AG04450 (cell line): ENCODE measurements at regions of chr17 and their contacts with region 1.

Region 1: DNA sequence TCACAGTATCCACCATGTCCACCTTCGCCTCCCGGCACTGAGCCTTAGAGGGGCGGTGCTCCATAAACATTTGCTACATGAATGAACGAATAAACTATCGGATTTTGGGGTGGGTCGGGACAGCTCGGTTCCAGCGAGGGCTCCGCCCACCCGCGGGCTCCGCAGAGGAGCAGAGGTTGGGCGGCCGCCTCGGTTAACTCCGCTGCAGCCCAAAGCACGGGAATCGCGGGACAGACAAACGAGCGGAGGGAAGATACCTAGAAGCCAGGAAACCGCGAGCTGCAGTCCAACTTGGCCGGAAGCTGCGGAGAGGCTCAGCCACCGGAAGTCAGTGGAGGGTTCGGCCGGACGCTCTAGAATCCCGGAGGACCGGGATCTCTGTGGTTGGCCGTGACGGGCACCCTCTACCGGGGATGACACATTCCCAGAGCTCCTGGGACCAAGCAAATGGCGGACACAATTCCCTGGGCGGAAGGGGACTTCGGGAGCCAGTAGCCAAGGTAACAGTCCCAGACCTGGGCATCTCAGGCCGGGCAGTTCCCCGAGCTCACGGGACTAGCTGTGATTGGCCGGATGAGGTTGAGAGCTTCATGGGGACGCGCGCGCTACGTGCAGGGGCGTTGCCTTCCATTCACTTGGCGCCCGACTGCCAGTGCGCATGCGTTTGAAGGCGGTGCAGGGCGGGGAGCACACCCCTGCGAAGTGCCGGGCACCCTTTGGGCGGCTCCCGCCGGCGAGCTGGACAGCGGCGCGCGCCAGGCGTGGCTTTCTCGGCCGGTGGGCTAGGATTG is 501 bp upstream of the MAPK7 start:
- DNase-seq: peak; percentile 98
- H3K4me3 ChIP-seq: peak overlapping the region; percentile 86
- H3K27ac ChIP-seq: peak overlapping the region; percentile 99
- H3K27me3 ChIP-seq: no peaks in the 10 kb centered on the region
- CTCF ChIP-seq: no peak

Region 2: GRCh38 chr17:19354748-19355147 is 23.0 kb before region 1 on chr17:
- CTCF ChIA-PET with region 1: interaction called, 6 read pairs
- POLR2A ChIA-PET with region 1: interaction called, 14 read pairs
- DNase-seq: no peak
- H3K4me3 ChIP-seq: no peak overlapping the region
- H3K27ac ChIP-seq: no peak overlapping the region
- H3K27me3 ChIP-seq: no peaks in the 10 kb centered on the region
- CTCF ChIP-seq: no peak

Region 3: DNA sequence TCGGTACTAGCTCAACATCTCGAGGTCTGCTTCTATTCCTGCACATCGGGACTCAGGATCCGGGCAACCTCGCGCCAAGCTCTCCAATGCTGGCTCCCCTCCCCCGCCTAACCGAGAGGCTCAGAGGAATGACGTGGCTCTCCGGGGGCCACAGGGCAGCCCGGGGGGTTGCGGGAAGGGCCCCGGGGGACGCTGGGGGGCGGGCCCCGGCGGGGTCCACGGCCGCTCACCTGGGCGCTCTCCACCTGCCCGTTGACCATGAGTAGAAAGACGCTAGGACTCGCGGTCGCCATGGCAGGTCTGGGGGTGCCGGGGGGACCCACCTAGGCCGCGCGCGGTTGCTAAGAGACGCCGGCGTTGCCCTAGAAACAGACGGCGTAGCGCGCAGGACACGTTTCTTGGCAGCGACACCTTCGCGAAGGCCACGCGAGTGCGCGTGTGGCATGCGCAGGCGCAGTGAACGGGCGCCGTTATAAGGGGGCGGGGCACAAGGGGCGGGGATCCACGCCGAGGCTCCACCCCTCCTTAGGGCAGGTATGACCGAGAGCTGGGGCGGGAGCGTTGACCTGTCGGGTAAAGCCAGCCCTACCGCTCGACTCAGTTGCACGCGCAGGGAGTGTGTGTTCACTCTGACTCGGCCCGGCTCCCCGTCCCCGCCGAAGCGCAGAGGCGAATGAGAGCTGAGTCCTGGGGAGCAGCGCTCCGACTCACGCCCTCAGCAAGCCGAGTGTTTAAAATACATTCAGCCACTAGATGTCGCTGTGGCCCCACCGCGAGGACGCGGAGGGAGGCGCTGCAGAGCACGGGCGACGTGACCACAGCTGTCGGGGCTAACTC is 15.3 kb before region 1 on chr17 and contains the start of gene B9D1:
- CTCF ChIA-PET with region 1: interaction called, 24 read pairs
- POLR2A ChIA-PET with region 1: interaction called, 24 read pairs
- DNase-seq: peak; percentile 84
- H3K4me3 ChIP-seq: peak within 1 kb of the TSS; percentile 87
- H3K27ac ChIP-seq: peak within 1 kb of the TSS; percentile 65
- H3K27me3 ChIP-seq: no peaks in the 10 kb centered on the region
- CTCF ChIP-seq: peak; percentile 84
- polyA plus RNA-seq, gene B9D1: 35.2 and 45.8 TPM in 2 replicates

Region 4: GRCh38 chr17:19590912-19591551 is 213.2 kb after region 1 on chr17:
- CTCF ChIA-PET with region 1: no interaction called
- POLR2A ChIA-PET with region 1: no interaction called
- DNase-seq: no peak
- H3K4me3 ChIP-seq: no peak overlapping the region
- H3K27ac ChIP-seq: no peak overlapping the region
- H3K27me3 ChIP-seq: peaks cover 12% of the 10 kb centered on the region
- CTCF ChIP-seq: no peak

Region 5: GRCh38 chr17:19678581-19679453 is 301.0 kb after region 1 on chr17:
- CTCF ChIA-PET with region 1: no interaction called
- POLR2A ChIA-PET with region 1: no interaction called
- DNase-seq: no peak
- H3K4me3 ChIP-seq: no peak overlapping the region
- H3K27ac ChIP-seq: no peak overlapping the region
- H3K27me3 ChIP-seq: peaks cover 3% of the 10 kb centered on the region
- CTCF ChIP-seq: no peak